ENCODE measurements at regions of chr5 and their contacts with region 1.

Region 1: GRCh38 chr5:107486489-107486888 is 184.2 kb downstream of the EFNA5 start:
- DNase-seq: peak in 1 of 9 donors; percentile 38
- ATAC-seq: peak; percentile 86
- H3K4me3 ChIP-seq: no peak overlapping the region
- H3K4me3 Mint-ChIP-seq: no peak overlapping the region
- H3K27ac ChIP-seq: no peak overlapping the region
- H3K27ac Mint-ChIP-seq: no peak overlapping the region
- H3K4me1 ChIP-seq: peaks cover 0 to 20% of the 10 kb centered on the region in 2 donors
- H3K4me1 Mint-ChIP-seq: peaks cover 0 to 17% (median 0%) of the 10 kb centered on the region in 7 donors
- H3K27me3 ChIP-seq: no peaks in the 10 kb centered on the region
- H3K27me3 Mint-ChIP-seq: peaks cover 0 to 17% (median 0%) of the 10 kb centered on the region in 5 donors

Region 2: GRCh38 chr5:107501965-107502675 is 15.6 kb after region 1 on chr5:
- CTCF ChIA-PET with region 1: no interaction called
- POLR2A ChIA-PET with region 1: no interaction called
- intact Hi-C with region 1: loop called in 1 of 2 experiments (anchors 2 kb)
- DNase-seq: no peak
- ATAC-seq: peak; percentile 45
- H3K4me3 ChIP-seq: no peak overlapping the region
- H3K4me3 Mint-ChIP-seq: peak overlapping the region in 1 of 10 donors; percentile 1
- H3K27ac ChIP-seq: no peak overlapping the region
- H3K27ac Mint-ChIP-seq: peak overlapping the region in 1 of 9 donors; percentile 21
- H3K4me1 ChIP-seq: no peaks in the 10 kb centered on the region
- H3K4me1 Mint-ChIP-seq: peaks cover 0 to 10% (median 2%) of the 10 kb centered on the region in 7 donors
- H3K27me3 ChIP-seq: no peaks in the 10 kb centered on the region
- H3K27me3 Mint-ChIP-seq: peaks cover 6 to 25% (median 18%) of the 10 kb centered on the region in 5 donors

Region 3: DNA sequence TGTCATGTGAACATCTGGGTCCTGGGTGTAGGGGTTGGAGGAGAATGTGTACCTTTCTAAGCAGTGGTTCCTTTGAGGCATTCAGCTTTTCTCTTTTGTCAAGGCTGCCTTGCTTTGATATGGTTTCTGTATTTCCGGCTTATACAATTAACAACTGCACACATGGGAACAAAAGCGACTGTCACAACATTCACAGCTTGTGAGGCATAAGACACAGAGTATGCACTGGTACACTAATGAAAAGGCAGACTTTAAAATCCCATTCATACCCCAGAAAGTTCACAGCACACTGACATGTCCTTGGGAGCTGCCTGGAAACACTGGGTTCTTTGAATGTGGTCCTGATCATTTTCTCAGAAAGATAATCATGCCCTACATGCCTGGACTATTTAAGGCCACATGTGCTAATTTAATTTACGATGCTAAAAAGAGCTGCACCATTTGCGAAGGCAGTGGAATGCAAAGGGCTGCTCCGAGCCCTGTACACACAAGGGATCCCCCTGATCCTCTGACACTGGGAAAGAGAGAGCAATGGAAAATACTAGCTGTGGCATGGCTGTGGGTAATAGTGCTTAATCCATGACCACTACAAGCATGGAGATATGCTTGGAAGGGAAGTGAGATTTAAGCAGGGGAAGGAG is 52.4 kb after region 1 on chr5:
- CTCF ChIA-PET with region 1: no interaction called
- POLR2A ChIA-PET with region 1: no interaction called
- intact Hi-C with region 1: loop called in 1 of 2 experiments (anchors 5 kb)
- DNase-seq: peak in 1 of 9 donors; percentile 2
- ATAC-seq: no peak
- H3K4me3 ChIP-seq: no peak overlapping the region
- H3K4me3 Mint-ChIP-seq: peak overlapping the region in 1 of 10 donors; percentile 4
- H3K27ac ChIP-seq: no peak overlapping the region
- H3K27ac Mint-ChIP-seq: no peak overlapping the region
- H3K4me1 ChIP-seq: peaks cover 6 to 10% of the 10 kb centered on the region in 2 donors
- H3K4me1 Mint-ChIP-seq: peaks cover 0 to 22% (median 8%) of the 10 kb centered on the region in 7 donors
- H3K27me3 ChIP-seq: no peaks in the 10 kb centered on the region
- H3K27me3 Mint-ChIP-seq: peaks cover 0 to 16% (median 13%) of the 10 kb centered on the region in 5 donors

Measured in naive thymus-derived CD4-positive, alpha-beta T cell (primary cell).